Calu3 (cell line): ENCODE measurements at regions of chr6 and their contacts with region 1.

Region 1: DNA sequence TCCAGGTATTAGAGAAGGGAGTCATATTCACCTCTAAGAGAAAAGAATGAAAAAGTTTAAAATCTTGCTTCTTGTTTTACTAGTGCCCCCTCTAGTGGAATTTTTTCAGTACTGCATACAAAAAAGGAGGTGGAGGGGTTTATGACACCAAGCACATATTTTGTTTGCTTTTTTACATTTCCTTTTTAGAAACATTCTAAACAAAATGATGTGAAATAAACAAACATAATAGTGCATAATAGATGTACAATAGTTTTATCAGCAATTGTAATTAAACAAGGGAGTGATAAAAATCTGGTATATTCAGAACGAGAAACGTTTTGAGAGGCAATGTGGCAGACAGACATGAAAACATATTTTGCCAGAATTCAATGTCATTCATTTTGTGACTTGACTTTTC is 111.0 kb upstream of the TFAP2D start:
- DNase-seq: peak; percentile 24
- H3K4me3 Mint-ChIP-seq: no peak overlapping the region
- H3K27ac Mint-ChIP-seq: no peak overlapping the region
- H3K4me1 Mint-ChIP-seq: no peaks in the 10 kb centered on the region
- H3K27me3 Mint-ChIP-seq: no peaks in the 10 kb centered on the region
- CTCF ChIP-seq: peak; percentile 46

Region 2: GRCh38 chr6:50264995-50265571 is 337.2 kb before region 1 on chr6:
- CTCF ChIA-PET with region 1: no interaction called
- intact Hi-C with region 1: loop called (anchors 2 kb)
- DNase-seq: peak; percentile 10
- H3K4me3 Mint-ChIP-seq: no peak overlapping the region
- H3K27ac Mint-ChIP-seq: no peak overlapping the region
- H3K4me1 Mint-ChIP-seq: no peaks in the 10 kb centered on the region
- H3K27me3 Mint-ChIP-seq: no peaks in the 10 kb centered on the region
- CTCF ChIP-seq: peak; percentile 31

Region 3: DNA sequence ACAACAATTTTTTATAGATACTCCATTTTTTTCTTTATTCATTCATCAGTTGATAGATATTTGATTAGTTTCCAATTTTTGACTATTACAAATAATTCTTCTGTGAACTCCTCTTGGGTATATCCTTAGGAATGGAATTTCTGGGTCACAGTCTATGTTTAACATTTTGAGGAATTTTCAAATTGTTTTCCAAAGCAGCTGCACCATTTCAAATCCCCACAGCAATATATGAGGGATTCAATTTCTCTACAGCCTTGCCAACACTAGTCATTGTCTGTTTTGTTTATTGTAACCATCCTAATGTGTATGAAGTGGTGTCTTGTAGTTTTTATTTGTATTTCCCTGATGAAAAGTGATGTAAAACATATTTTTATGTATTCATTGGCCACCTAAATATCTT is 232.3 kb before region 1 on chr6:
- CTCF ChIA-PET with region 1: no interaction called
- intact Hi-C with region 1: loop called (anchors 10 kb)
- DNase-seq: no peak
- H3K4me3 Mint-ChIP-seq: no peak overlapping the region
- H3K27ac Mint-ChIP-seq: no peak overlapping the region
- H3K4me1 Mint-ChIP-seq: no peaks in the 10 kb centered on the region
- H3K27me3 Mint-ChIP-seq: no peaks in the 10 kb centered on the region
- CTCF ChIP-seq: no peak

Region 4: DNA sequence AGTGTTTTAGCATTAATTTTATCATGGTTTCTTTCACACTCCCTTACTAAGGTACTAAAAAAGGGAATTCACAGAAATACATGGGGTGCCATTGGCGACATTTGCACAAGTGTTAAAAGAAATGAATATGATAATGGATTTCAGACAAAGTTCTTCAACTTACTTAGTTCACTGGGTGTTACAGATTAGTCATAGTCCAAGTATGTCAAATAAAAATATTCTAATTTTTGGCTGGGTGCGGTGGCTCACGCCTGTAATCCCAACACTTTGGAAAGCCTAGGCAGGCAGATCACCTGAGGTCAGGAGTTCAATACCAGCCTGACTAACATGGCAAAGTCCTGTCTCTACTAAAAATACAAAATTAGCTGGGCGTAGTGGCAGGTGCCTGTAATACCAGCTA is 175.0 kb before region 1 on chr6:
- CTCF ChIA-PET with region 1: no interaction called
- intact Hi-C with region 1: no loop called
- DNase-seq: no peak
- H3K4me3 Mint-ChIP-seq: no peak overlapping the region
- H3K27ac Mint-ChIP-seq: no peak overlapping the region
- H3K4me1 Mint-ChIP-seq: no peaks in the 10 kb centered on the region
- H3K27me3 Mint-ChIP-seq: no peaks in the 10 kb centered on the region
- CTCF ChIP-seq: no peak

Region 5: DNA sequence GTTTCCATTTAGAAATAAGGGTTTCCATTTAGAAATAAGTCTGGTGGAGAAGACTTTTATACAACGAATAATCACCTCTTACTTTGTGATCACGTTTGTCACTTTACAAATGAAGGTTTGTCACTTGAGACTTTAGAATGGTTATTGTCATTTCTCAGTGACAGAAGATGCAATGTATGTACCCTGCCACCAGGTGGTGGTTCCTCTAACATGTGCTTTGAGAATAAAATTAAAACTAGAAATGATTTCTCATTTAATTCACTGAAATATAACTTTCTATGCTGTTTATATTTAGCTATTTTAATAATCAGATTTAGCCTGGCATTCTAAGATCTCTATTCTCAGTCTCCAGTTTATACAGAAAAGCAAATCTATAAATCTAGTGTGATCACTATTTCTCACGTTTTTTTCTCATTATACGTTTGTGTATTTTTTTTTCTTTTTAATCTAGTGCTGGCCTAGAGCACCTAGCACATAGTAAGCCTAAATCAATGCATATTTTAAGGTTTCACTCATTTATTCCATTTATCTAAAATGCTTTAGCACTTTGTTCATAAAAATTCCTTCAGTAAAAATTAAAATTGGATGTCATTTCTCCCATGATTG is 53.7 kb after region 1 on chr6:
- CTCF ChIA-PET with region 1: no interaction called
- intact Hi-C with region 1: no loop called
- DNase-seq: peak; percentile 36
- H3K4me3 Mint-ChIP-seq: no peak overlapping the region
- H3K27ac Mint-ChIP-seq: no peak overlapping the region
- H3K4me1 Mint-ChIP-seq: no peaks in the 10 kb centered on the region
- H3K27me3 Mint-ChIP-seq: no peaks in the 10 kb centered on the region
- CTCF ChIP-seq: peak; percentile 70